Left cardiac atrium (tissue), 4 donors: ENCODE measurements at regions of chr3 and their contacts with region 1.

Region 1: GRCh38 chr3:155334914-155335723 is 41.6 kb upstream of the STRIT1 start:
- DNase-seq: no peak
- ATAC-seq: peak in 1 of 2 donors; percentile 47

Region 2: DNA sequence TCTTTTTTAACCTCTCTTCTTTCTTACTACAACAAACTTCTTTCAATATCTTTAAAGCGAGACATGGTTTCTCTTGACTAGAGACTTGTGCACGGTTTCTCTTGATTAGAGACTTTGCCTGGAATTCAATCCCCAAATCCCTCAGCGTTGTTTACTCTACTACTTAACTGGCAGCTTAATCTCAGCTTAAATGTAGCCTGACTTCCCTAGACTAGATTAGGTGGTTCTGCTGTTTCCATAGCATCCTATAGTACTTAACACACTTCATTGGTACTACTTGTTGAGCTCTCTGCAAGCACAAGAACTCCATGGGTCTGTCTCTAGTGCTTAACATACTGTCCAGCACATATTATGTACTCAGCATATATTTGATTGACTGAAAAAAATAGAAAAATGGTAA is 737.0 kb before region 1 on chr3:
- intact Hi-C with region 1: loop called in 1 of 2 experiments (anchors 5 kb)
- DNase-seq: no peak
- ATAC-seq: no peak

Region 3: DNA sequence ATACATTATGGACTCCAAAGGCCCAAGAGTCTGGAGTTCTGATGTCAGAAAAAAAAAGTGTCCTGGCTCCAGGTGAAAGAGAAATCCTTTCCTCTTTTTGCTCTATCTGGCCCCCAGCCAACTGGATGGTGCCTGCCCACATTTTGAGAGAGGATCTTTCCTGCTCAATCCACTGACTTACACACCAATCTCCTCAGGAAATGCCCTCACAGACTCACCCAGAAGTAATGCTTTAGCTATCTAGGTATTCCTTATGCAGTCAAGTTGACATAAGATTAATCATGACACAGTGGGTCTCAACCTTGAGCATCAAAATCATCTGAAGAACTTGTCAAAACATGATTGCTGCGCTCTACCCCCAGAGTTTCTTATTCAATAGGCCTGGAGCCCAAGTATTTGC is 72.8 kb before region 1 on chr3:
- intact Hi-C with region 1: no loop called
- DNase-seq: no peak
- ATAC-seq: no peak